Panc1 (cell line): ENCODE measurements at regions of chr2 and their contacts with region 1.

Region 1: DNA sequence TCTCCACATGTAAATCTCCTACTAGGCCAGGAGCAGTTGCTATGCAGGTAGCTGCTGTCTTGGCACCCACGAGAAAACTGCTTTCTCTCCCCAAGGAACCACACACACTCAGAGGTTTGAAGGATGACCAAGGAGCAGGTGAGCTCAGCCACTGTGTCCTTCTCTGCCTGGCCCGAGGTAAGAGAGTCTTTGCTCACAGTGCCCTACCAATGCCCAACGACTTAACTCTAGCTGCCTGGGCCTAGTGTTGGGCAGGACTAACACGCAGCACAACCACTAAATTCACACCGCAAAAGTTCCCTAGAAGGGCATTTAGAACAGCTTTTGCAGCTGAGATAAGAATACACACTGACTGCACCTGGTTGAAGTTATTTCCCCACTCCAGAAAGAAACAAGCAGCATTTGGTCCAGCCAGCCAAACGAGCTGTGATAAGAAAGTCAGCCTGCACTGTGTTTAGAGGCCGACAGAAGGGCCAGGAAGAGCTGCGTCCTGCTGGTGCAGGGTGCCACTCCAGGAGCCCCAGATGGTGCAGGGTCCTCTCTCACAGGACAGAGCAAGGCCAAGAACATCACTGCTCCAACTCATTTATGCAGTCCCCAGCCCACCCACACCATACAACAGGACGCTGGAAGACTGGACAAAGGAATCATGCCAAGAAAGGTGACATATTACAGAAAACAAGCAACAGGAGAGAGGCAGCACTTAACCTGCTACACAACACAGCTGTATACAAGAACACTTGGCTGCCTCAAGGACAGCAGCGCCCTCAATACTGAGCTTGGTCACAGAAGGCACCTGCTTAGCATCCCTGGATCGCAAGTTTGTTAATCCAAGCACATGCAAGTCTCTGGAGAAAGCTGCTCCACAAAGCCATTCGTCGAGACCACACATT is 12.5 kb downstream of the HDLBP start:
- DNase-seq: no peak
- ATAC-seq: 0 out of 2 replicates have a peak, but pooled peaks have one; percentile 44
- H3K4me3 ChIP-seq: no peak overlapping the region
- H3K27ac ChIP-seq: no peak overlapping the region
- H3K4me1 ChIP-seq: peaks cover 16% of the 10 kb centered on the region
- H3K27me3 ChIP-seq: no peaks in the 10 kb centered on the region
- CTCF ChIP-seq: no peak

Region 2: DNA sequence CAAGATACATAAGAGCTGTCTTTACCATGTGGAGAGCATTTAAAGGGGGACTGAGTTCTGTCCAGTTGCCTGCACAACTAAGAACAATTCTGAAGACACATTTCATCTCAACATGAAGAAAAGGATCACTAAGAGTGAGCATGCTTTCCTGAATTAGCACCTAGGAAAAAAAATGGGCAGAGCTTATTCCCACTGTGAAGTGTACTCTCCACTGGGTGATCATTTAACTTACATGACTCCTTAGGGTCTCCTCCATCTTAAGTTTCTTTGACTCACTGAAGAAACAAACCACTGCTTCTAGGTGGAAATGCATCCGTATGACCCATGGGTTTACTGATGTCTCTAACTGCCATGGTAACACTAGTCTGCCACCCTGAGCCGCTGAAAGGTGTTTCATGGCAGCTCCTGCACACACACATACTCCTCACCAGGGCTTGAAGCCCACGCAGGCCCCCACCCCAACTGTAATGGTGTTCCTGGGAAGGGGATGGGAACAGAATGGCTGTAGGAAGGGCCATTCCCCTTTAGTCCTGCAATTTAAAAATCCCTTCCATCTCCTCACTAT is 14.6 kb before region 1 on chr2:
- CTCF ChIA-PET with region 1: no interaction called
- POLR2A ChIA-PET with region 1: interaction called, 12 read pairs
- in situ Hi-C with region 1: no loop called
- intact Hi-C with region 1: no loop called
- DNase-seq: no peak
- ATAC-seq: no peak
- H3K4me3 ChIP-seq: no peak overlapping the region
- H3K27ac ChIP-seq: no peak overlapping the region
- H3K4me1 ChIP-seq: peaks cover 5% of the 10 kb centered on the region; the same call in 1 of the 2 replicates
- H3K27me3 ChIP-seq: no peaks in the 10 kb centered on the region
- CTCF ChIP-seq: no peak

Region 3: GRCh38 chr2:241339839-241340630 is 37.0 kb after region 1 on chr2:
- CTCF ChIA-PET with region 1: no interaction called
- POLR2A ChIA-PET with region 1: no interaction called
- in situ Hi-C with region 1: no loop called
- intact Hi-C with region 1: no loop called
- DNase-seq: no peak
- ATAC-seq: no peak
- H3K4me3 ChIP-seq: no peak overlapping the region
- H3K27ac ChIP-seq: no peak overlapping the region
- H3K4me1 ChIP-seq: no peaks in the 10 kb centered on the region
- H3K27me3 ChIP-seq: no peaks in the 10 kb centered on the region
- CTCF ChIP-seq: no peak